Activated T-helper 1 cell treated with anti-CD3 and anti-CD28 coated beads, Interleukin-12 subunit alpha, Interleukin-12 subunit beta, Interleukin-2, Interleukin-4 antibody, amounts not matched to agents 30 ng/mL and 10 ng/mL and 1 ng/mL, durations not matched to agents 14 hours and 24 hours and 36 hours (primary cell): ENCODE measurements at regions of chr12 and their contacts with region 1.

Region 1: GRCh38 chr12:64610149-64610678 is at the start of gene RASSF3:
- DNase-seq: peak; percentile 76
- H3K4me3 Mint-ChIP-seq: peak within 1 kb of the TSS; percentile 97
- H3K27ac Mint-ChIP-seq: peak within 1 kb of the TSS; percentile 98
- H3K4me1 Mint-ChIP-seq: peaks cover 47% of the 10 kb centered on the region
- H3K27me3 Mint-ChIP-seq: no peaks in the 10 kb centered on the region
- total RNA-seq, gene RASSF3: 37.1 and 38.3 TPM in 2 replicates

Region 2: DNA sequence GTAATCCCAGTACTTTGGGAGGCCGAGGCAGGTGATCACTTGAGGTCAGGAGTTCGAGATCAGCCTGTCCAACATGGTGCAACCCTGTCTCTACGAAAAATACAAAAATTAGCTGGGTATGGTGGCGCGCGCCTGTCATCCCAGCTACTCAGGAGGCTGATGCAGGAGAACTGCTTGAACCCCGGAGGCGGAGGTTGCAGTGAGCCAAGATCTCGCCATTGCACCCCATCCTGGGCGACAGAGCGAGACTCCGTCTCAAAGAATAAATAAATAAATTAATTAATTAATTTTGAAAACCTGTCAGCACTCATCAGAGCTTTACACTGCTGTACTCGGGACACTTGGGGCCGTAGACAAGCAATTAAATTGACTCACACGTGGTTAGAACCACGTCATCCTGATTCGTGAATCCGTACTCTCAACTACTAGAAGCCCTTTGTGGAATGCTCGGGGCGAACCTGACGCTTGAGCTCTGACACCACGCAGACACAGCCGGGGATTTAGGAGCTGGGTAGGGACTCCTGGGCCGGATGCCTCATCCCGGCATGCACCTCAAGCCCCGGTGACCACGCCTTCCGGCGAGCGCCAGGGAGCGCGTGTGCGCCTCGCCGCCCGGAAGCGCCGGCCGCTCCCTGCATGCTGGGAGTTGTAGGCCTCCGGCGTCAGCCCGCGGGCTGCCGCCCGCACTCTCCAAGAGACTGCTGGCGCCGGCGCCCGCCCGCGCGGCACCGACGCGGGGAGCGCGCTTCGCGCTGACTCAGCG is 206.3 kb before region 1 on chr12 and contains the start of gene XPOT:
- intact Hi-C with region 1: loop called (anchors 2 kb)
- DNase-seq: peak; percentile 92
- H3K4me3 Mint-ChIP-seq: peak within 1 kb of the TSS; percentile 95
- H3K27ac Mint-ChIP-seq: peak within 1 kb of the TSS; percentile 99
- H3K4me1 Mint-ChIP-seq: peaks cover 20% of the 10 kb centered on the region
- H3K27me3 Mint-ChIP-seq: no peaks in the 10 kb centered on the region
- total RNA-seq, gene XPOT: 145 and 146 TPM in 2 replicates

Region 3: DNA sequence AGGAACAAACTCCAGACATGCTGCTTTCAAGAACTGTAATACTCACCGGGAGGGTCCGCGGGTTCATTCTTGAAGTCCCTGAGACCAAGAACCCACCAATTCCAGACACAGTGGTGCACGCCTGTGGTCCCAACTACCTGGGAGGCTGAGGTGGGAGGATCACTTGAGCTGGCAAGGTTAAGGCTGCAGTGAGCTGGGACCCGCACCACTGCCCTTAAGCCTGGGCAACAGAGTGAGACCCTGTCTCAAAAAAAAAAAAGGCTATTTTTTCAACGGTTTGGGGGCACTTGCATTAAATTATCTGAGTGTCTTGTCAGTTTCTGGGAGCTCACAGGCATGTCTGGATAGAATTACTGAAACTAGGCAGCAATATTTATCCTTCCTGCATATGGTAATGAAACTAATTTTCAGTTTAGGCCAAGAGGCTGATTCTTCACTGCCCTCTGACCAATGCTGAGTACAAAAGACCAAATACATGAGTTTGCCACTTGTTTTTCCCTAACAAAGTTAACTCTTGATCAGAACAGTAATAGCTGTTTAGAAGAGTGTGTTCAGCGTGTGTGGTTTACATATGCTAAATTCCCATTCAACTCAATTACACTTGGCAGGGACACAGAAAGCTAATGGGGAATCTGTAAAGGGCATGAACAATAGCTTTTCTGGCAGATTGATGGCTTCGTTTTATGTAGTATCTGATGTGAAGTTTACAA is 65.7 kb before region 1 on chr12:
- intact Hi-C with region 1: loop called (anchors 1 kb)
- DNase-seq: no peak
- H3K4me3 Mint-ChIP-seq: no peak overlapping the region
- H3K27ac Mint-ChIP-seq: no peak overlapping the region
- H3K4me1 Mint-ChIP-seq: peaks cover 3% of the 10 kb centered on the region
- H3K27me3 Mint-ChIP-seq: peaks cover 13% of the 10 kb centered on the region

Region 4: GRCh38 chr12:64625243-64626077 is 15.2 kb after region 1 on chr12:
- intact Hi-C with region 1: loop called (anchors 1 kb)
- DNase-seq: no peak
- H3K4me3 Mint-ChIP-seq: peak overlapping the region; percentile 77
- H3K27ac Mint-ChIP-seq: peak overlapping the region; percentile 83
- H3K4me1 Mint-ChIP-seq: peaks cover 33% of the 10 kb centered on the region
- H3K27me3 Mint-ChIP-seq: no peaks in the 10 kb centered on the region

Region 5: DNA sequence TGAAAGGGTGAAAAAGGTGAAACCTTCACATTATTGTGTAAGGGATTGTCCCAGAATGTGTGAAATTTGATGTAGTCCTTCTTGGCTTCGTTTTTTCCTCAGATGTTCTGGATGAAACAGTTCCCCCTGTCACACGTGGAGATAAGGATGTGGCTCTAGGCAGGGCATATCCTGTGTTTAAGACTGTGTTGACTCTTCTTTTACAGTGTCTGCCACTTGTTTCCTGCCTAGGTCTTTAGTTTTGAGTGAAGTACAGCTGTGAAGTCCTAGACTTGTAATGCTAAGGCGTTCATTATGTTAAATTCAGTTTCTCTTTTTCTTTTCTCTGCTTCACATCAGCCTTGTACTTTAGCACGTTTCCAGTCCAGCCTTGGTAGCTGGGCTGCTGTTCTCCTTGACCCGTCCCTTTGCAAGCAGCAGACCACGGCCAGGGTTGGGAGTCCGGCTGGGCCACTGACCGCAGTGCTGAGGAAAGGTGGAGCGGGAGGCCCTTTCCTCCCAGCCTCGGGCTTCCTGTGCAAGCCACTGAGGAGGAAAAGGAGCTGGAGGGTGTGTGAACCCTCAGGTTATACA is 59.1 kb after region 1 on chr12:
- intact Hi-C with region 1: loop called (anchors 1 kb)
- DNase-seq: peak; percentile 53
- H3K4me3 Mint-ChIP-seq: peak overlapping the region; percentile 85
- H3K27ac Mint-ChIP-seq: peak overlapping the region; percentile 94
- H3K4me1 Mint-ChIP-seq: peaks cover 87% of the 10 kb centered on the region
- H3K27me3 Mint-ChIP-seq: no peaks in the 10 kb centered on the region

Region 6: GRCh38 chr12:64696080-64696741 is 86.0 kb after region 1 on chr12:
- intact Hi-C with region 1: loop called (anchors 1 kb)
- DNase-seq: no peak
- H3K4me3 Mint-ChIP-seq: no peak overlapping the region
- H3K27ac Mint-ChIP-seq: no peak overlapping the region
- H3K4me1 Mint-ChIP-seq: peaks cover 73% of the 10 kb centered on the region
- H3K27me3 Mint-ChIP-seq: no peaks in the 10 kb centered on the region

Region 7: GRCh38 chr12:64714551-64714968 is 104.3 kb after region 1 on chr12:
- intact Hi-C with region 1: no loop called
- DNase-seq: no peak
- H3K4me3 Mint-ChIP-seq: no peak overlapping the region
- H3K27ac Mint-ChIP-seq: no peak overlapping the region
- H3K4me1 Mint-ChIP-seq: peaks cover 35% of the 10 kb centered on the region
- H3K27me3 Mint-ChIP-seq: no peaks in the 10 kb centered on the region